A673 (cell line): ENCODE measurements at regions of chr17 and their contacts with region 1.

Region 1: DNA sequence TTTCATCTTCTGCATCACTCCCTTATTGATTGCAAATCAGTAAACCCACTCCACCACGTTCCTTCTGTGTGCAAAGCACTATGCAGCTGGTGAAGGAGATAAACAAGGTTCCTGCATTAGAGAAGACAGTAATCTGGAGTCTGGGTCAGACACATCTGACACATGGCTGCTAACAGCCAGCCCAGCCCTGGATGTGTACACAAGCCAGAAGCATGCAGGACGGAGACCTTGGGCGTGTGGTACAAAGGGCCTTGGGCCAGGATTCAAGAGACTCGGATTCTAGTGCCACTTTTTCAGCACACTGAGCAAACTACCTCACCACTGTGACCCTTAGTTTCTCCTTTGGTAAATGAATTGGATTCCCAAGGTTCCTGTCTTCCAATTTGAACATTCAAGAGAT is 86.6 kb upstream of the DNAH9 start:
- DNase-seq: no peak
- H3K4me3 ChIP-seq: no peak overlapping the region
- H3K27ac ChIP-seq: peak overlapping the region; percentile 69
- H3K4me1 ChIP-seq: peaks cover 57% of the 10 kb centered on the region
- H3K27me3 ChIP-seq: no peaks in the 10 kb centered on the region
- CTCF ChIP-seq: no peak

Region 2: GRCh38 chr17:10875979-10876555 is 635.6 kb before region 1 on chr17:
- CTCF ChIA-PET with region 1: interaction called, 3 read pairs
- POLR2A ChIA-PET with region 1: no interaction called
- intact Hi-C with region 1: loop called (anchors 10 kb)
- DNase-seq: peak; percentile 65
- H3K4me3 ChIP-seq: no peak overlapping the region
- H3K27ac ChIP-seq: no peak overlapping the region
- H3K4me1 ChIP-seq: peaks cover 7% of the 10 kb centered on the region
- H3K27me3 ChIP-seq: no peaks in the 10 kb centered on the region
- CTCF ChIP-seq: peak; percentile 75

Region 3: DNA sequence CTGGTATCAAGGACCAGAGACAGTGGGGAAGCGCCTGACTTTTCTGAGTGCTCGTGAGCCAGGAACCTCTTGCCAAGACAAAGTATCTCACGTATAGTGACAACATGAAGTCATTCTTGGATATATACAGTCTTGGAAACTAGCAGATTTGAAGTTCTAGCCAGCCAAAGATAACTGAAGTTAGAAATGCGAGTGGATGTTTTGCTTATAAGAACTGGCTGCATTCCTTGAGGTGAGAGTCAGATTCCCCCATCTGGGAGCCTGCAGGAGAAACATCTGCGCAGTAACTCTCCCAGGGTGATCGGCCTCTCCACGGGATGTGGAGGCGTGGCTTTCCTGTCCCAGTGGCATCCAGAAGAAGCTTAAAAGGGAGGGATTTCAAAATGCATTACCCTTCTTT is 180.9 kb before region 1 on chr17:
- CTCF ChIA-PET with region 1: no interaction called
- POLR2A ChIA-PET with region 1: no interaction called
- intact Hi-C with region 1: loop called (anchors 5 kb)
- DNase-seq: peak; percentile 95
- H3K4me3 ChIP-seq: peak overlapping the region; percentile 14
- H3K27ac ChIP-seq: peak overlapping the region; percentile 66
- H3K4me1 ChIP-seq: peaks cover 48% of the 10 kb centered on the region
- H3K27me3 ChIP-seq: no peaks in the 10 kb centered on the region
- CTCF ChIP-seq: no peak

Region 4: GRCh38 chr17:11598274-11599221 is 86.9 kb after region 1 on chr17 and contains the start of gene DNAH9:
- CTCF ChIA-PET with region 1: no interaction called
- POLR2A ChIA-PET with region 1: no interaction called
- intact Hi-C with region 1: loop called (anchors 5 kb)
- DNase-seq: peak; percentile 99
- H3K4me3 ChIP-seq: peak within 1 kb of the TSS; percentile 79
- H3K27ac ChIP-seq: peak within 1 kb of the TSS; percentile 74
- H3K4me1 ChIP-seq: no peaks in the 10 kb centered on the region
- H3K27me3 ChIP-seq: no peaks in the 10 kb centered on the region
- CTCF ChIP-seq: no peak
- total RNA-seq, gene DNAH9: 6.2 and 6.6 TPM in 2 replicates

Region 5: GRCh38 chr17:11742886-11743285 is 231.2 kb after region 1 on chr17:
- CTCF ChIA-PET with region 1: interaction called, 7 read pairs
- POLR2A ChIA-PET with region 1: no interaction called
- intact Hi-C with region 1: loop called (anchors 5 kb)
- DNase-seq: peak; percentile 81
- H3K4me3 ChIP-seq: no peak overlapping the region
- H3K27ac ChIP-seq: no peak overlapping the region
- H3K4me1 ChIP-seq: peaks cover 37% of the 10 kb centered on the region
- H3K27me3 ChIP-seq: no peaks in the 10 kb centered on the region
- CTCF ChIP-seq: peak; percentile 79

Region 6: DNA sequence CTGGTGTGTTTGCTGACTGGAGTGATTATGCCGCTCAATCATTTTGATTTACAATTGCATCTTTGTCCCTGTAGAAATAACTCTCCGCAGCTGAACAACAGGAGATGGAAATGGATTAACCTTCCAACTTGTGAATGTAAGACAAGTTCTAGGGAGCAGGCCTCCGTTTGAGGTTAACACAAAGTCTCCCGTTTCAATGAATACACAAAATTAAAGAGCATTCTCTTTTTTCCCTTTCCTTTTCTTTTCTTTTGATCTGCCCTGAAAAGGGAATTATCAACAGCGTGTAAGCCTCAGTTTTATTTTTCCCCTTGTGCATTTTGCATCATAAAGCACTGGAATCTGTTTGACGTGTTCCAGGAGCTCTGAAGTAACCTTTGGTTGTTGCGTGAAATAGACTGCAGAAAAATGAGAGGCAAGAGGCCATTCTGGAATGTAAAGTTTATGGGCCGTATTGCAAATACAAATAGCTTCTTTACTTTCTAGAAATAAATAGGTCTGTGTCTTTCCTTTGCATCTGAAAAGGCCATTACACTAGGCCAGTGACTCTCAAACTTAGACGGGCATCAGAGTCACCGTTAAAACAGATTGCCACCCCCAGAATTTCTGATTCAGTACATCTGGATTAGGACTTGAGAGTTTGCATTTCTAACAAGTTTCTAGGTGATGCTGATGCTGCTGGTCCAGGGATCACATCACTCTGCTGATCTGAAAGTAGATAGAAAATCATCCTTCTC is 320.9 kb after region 1 on chr17:
- CTCF ChIA-PET with region 1: no interaction called
- POLR2A ChIA-PET with region 1: no interaction called
- intact Hi-C with region 1: no loop called
- DNase-seq: no peak
- H3K4me3 ChIP-seq: no peak overlapping the region
- H3K27ac ChIP-seq: no peak overlapping the region
- H3K4me1 ChIP-seq: no peaks in the 10 kb centered on the region
- H3K27me3 ChIP-seq: no peaks in the 10 kb centered on the region
- CTCF ChIP-seq: no peak